Naive thymus-derived CD4-positive, alpha-beta T cell (primary cell): ENCODE measurements at regions of chr1 and their contacts with region 1.

Region 1: DNA sequence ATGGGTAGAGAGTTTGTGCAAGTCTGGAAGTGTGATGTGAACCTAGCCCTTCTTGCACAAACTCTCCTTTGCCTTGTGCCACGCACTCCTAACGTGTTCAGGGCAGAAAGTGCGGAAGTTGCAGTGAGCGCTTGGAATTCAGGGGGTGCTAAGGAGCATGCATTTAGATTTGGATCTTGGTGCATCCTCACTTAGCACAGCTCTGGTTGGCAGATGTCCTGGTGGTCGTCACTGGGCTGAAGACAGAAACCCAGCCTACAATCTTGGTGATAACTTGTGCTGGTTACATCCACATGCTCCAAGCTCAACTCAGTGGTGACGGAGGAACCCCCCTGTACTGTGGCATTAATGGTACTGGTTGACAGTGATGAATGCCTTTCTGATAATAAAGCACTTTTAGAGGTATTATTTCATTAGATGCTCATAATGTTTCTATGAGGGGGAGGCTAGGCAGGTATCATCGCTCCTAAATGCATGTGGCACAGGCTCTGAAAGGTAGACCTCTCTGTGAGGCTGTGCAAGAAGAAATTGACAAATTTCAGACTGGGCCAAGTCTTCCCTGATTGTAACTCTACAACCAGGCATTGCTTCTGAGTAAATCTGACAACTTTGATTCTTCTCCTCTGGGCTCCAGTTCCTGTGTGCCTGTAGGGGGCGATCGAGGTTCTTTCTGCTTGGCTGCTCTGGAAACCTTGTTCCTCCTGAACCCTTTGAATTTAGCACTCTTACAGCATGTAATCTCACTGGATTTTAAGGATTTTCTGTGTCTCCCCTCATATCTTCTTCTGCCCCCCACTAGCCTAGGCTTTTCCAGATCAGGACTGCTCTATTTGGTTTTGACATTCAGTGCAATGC is 40.6 kb downstream of the MAPKAPK2 start:
- DNase-seq: peak in 8 of 9 donors; percentile 35 to 64 (median 58)
- ATAC-seq: peak; percentile 61
- H3K4me3 ChIP-seq: no peak overlapping the region
- H3K4me3 Mint-ChIP-seq: no peak overlapping the region
- H3K27ac ChIP-seq: no peak overlapping the region
- H3K27ac Mint-ChIP-seq: peak overlapping the region in 8 of 9 donors; percentile 19 to 90 (median 58)
- H3K4me1 ChIP-seq: peaks cover 17 to 25% of the 10 kb centered on the region in 2 donors
- H3K4me1 Mint-ChIP-seq: peaks cover 29 to 50% (median 46%) of the 10 kb centered on the region in 7 donors
- H3K27me3 ChIP-seq: no peaks in the 10 kb centered on the region
- H3K27me3 Mint-ChIP-seq: no peaks in the 10 kb centered on the region

Region 2: GRCh38 chr1:206442101-206442500 is 283.2 kb before region 1 on chr1:
- CTCF ChIA-PET with region 1: no interaction called
- POLR2A ChIA-PET with region 1: no interaction called
- intact Hi-C with region 1: no loop called
- DNase-seq: no peak
- ATAC-seq: no peak
- H3K4me3 ChIP-seq: no peak overlapping the region
- H3K4me3 Mint-ChIP-seq: no peak overlapping the region
- H3K27ac ChIP-seq: no peak overlapping the region
- H3K27ac Mint-ChIP-seq: peak overlapping the region in 1 of 9 donors; percentile 16
- H3K4me1 ChIP-seq: no peaks in the 10 kb centered on the region
- H3K4me1 Mint-ChIP-seq: peaks cover 0 to 4% (median 0%) of the 10 kb centered on the region in 7 donors
- H3K27me3 ChIP-seq: no peaks in the 10 kb centered on the region
- H3K27me3 Mint-ChIP-seq: no peaks in the 10 kb centered on the region

Region 3: DNA sequence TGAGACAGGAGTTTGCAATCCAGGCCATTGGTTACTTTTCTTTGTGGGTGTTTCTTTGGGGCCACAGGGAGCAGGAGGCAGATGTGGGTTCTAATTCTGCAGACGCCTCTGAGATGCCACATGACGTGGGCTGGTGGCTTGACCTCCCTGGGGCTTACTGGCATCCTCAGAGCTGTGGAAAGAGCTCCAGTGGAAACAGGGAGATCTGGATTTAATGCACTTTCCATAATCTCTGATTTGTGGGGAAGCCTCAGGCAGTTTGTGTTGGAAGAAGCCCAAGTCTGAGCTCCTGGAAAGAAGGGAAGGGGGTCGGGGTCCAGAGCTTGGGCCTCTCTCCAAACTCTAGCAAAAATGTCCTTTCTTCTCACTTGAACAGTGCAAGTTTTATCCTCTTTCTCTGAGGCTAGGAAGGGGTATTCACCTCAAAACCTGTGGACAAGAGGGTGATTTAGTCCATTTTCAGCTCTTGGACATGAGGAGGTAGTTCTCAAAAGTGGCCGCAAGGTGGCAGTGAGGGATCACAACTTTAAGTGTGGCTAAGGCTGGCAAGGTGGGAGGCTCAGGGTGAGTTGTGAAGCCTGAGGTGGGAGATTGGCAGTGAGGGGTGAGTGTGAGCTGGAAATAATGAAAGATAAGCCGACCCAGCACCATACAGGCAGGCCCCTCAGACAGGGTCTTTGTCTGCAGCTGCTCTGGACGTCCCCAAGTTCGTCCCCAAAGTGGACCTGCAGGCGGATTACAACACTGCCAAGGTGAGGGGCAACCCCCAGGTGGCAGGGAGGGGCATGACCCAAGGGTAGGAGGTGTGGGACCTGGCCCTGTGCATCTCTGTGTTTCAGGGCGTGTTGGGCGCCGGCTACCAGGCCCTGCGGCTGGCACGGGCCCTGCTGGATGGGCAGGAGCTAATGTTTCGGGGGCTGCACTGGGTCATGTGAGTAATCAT is 245.9 kb before region 1 on chr1:
- CTCF ChIA-PET with region 1: no interaction called
- POLR2A ChIA-PET with region 1: no interaction called
- intact Hi-C with region 1: loop called in 1 of 2 experiments (anchors 1 kb)
- DNase-seq: peak in 8 of 9 donors; percentile 43 to 65 (median 56)
- ATAC-seq: peak; percentile 84
- H3K4me3 ChIP-seq: no peak overlapping the region
- H3K4me3 Mint-ChIP-seq: no peak overlapping the region
- H3K27ac ChIP-seq: no peak overlapping the region
- H3K27ac Mint-ChIP-seq: peak overlapping the region; percentile 20 to 85 (median 66)
- H3K4me1 ChIP-seq: peaks cover 0 to 11% of the 10 kb centered on the region in 2 donors
- H3K4me1 Mint-ChIP-seq: peaks cover 8 to 24% (median 17%) of the 10 kb centered on the region in 7 donors
- H3K27me3 ChIP-seq: no peaks in the 10 kb centered on the region
- H3K27me3 Mint-ChIP-seq: no peaks in the 10 kb centered on the region

Region 4: GRCh38 chr1:206658264-206658980 is 66.9 kb before region 1 on chr1:
- CTCF ChIA-PET with region 1: no interaction called
- POLR2A ChIA-PET with region 1: no interaction called
- intact Hi-C with region 1: loop called in 1 of 2 experiments (anchors 1 kb)
- DNase-seq: peak; percentile 17 to 69 (median 43)
- ATAC-seq: peak; percentile 95
- H3K4me3 ChIP-seq: no peak overlapping the region
- H3K4me3 Mint-ChIP-seq: peak overlapping the region in 1 of 10 donors; percentile 62
- H3K27ac ChIP-seq: no peak overlapping the region
- H3K27ac Mint-ChIP-seq: peak overlapping the region in 1 of 9 donors; percentile 51
- H3K4me1 ChIP-seq: no peaks in the 10 kb centered on the region
- H3K4me1 Mint-ChIP-seq: peaks cover 5 to 20% (median 10%) of the 10 kb centered on the region in 7 donors
- H3K27me3 ChIP-seq: peaks cover 0 to 4% of the 10 kb centered on the region in 2 donors
- H3K27me3 Mint-ChIP-seq: peaks cover 13 to 42% (median 37%) of the 10 kb centered on the region in 5 donors

Region 5: GRCh38 chr1:206703661-206704060 is 21.7 kb before region 1 on chr1:
- CTCF ChIA-PET with region 1: interaction called, 6 read pairs
- POLR2A ChIA-PET with region 1: interaction called, 3 read pairs
- intact Hi-C with region 1: loop called in 1 of 2 experiments (anchors 2 kb)
- DNase-seq: peak in 8 of 9 donors; percentile 32 to 84 (median 58)
- ATAC-seq: peak; percentile 89
- H3K4me3 ChIP-seq: no peak overlapping the region
- H3K4me3 Mint-ChIP-seq: peak overlapping the region; percentile 25 to 82 (median 64)
- H3K27ac ChIP-seq: peak overlapping the region; percentile 47
- H3K27ac Mint-ChIP-seq: peak overlapping the region; percentile 15 to 89 (median 77)
- H3K4me1 ChIP-seq: peaks cover 55 to 56% of the 10 kb centered on the region in 2 donors
- H3K4me1 Mint-ChIP-seq: peaks cover 78 to 94% (median 92%) of the 10 kb centered on the region in 7 donors
- H3K27me3 ChIP-seq: no peaks in the 10 kb centered on the region
- H3K27me3 Mint-ChIP-seq: no peaks in the 10 kb centered on the region

Region 6: DNA sequence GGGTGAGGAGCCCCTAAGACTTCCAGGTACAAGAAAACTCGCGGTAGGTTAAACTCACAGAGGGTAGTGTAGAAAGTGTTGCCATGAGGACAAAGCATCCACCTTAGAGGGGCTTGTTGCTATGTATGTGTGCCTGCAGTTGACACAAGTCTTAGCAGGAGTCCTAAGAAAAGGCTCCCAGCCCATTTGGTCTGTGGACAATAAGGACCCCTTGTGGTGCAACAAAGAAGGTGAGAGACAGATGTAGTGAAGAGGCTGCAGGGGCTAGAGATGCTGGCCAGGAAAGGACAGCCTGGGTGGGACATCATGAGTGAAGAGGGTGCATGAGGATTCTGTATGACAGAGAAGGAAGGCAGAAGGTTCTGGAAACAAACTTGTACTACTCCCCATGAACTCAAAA is 83.3 kb after region 1 on chr1:
- CTCF ChIA-PET with region 1: interaction called, 329 read pairs
- POLR2A ChIA-PET with region 1: interaction called, 148 read pairs
- intact Hi-C with region 1: loop called (anchors 1 kb)
- DNase-seq: peak in 7 of 9 donors; percentile 47 to 71 (median 58)
- ATAC-seq: peak; percentile 90
- H3K4me3 ChIP-seq: no peak overlapping the region
- H3K4me3 Mint-ChIP-seq: peak overlapping the region in 1 of 10 donors; percentile 8
- H3K27ac ChIP-seq: no peak overlapping the region
- H3K27ac Mint-ChIP-seq: peak overlapping the region in 8 of 9 donors; percentile 17 to 76 (median 51)
- H3K4me1 ChIP-seq: peaks cover 30 to 42% of the 10 kb centered on the region in 2 donors
- H3K4me1 Mint-ChIP-seq: peaks cover 24 to 61% (median 52%) of the 10 kb centered on the region in 7 donors
- H3K27me3 ChIP-seq: no peaks in the 10 kb centered on the region
- H3K27me3 Mint-ChIP-seq: peaks cover 0 to 12% (median 0%) of the 10 kb centered on the region in 5 donors

Region 7: GRCh38 chr1:206935491-206936067 is 210.2 kb after region 1 on chr1:
- CTCF ChIA-PET with region 1: interaction called, 27 read pairs
- POLR2A ChIA-PET with region 1: no interaction called
- intact Hi-C with region 1: loop called in 1 of 2 experiments (anchors 1 kb)
- DNase-seq: peak in 4 of 9 donors; percentile 28 to 56 (median 48)
- ATAC-seq: peak; percentile 68
- H3K4me3 ChIP-seq: no peak overlapping the region
- H3K4me3 Mint-ChIP-seq: no peak overlapping the region
- H3K27ac ChIP-seq: no peak overlapping the region
- H3K27ac Mint-ChIP-seq: peak overlapping the region in 1 of 9 donors; percentile 12
- H3K4me1 ChIP-seq: peaks cover 6 to 12% of the 10 kb centered on the region in 2 donors
- H3K4me1 Mint-ChIP-seq: peaks cover 2 to 31% (median 29%) of the 10 kb centered on the region in 7 donors
- H3K27me3 ChIP-seq: no peaks in the 10 kb centered on the region
- H3K27me3 Mint-ChIP-seq: peaks cover 0 to 8% (median 0%) of the 10 kb centered on the region in 5 donors

Region 8: DNA sequence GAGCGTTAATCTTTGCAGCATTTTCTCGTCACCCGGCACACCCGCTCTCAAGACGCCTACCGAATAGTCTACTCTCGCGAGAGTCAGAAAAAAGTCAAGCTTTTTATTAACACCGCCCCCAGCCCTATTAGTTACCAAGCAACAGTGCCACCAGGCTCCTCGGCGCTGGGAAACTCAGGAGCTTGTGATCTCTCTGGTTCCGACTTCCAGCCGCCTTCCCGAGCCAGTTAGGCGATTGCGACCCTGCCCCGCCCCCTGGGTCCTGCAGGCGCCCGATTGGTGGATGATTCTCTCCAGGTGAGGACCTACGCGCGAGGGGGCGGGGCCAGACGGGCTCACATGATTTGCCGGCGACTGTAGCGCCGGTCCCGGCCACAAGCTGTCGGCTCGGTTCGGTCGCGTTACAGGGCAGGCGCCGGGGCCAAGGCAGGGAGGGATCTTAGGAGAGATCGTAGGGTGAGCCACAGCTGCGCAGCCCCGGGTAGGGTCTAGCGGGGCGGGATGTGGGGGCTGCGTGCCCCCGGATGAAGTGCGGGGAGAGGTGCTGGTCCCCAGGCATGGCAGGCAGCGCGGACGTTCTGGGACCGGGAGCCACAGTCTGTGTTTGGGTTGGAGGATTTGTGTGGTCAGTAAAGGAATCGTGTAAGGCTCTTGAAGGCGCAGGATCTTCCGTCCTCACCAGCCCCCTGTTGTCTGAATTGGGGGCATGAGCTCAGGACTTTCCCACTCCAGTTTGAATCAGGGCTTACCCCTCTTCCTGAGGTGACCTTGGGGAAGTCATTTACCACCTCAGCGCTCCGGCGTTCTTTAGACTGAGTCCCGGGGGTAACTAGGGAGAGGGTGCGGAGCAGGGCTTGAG is 327.8 kb after region 1 on chr1 and contains the start of gene PFKFB2:
- CTCF ChIA-PET with region 1: no interaction called
- POLR2A ChIA-PET with region 1: no interaction called
- intact Hi-C with region 1: loop called in 1 of 2 experiments (anchors 5 kb)
- DNase-seq: peak; percentile 93 to 97 (median 96)
- ATAC-seq: peak; percentile 93
- H3K4me3 ChIP-seq: peak within 1 kb of the TSS; percentile 85
- H3K4me3 Mint-ChIP-seq: peak within 1 kb of the TSS; percentile 95 to 100 (median 98)
- H3K27ac ChIP-seq: peak within 1 kb of the TSS; percentile 72
- H3K27ac Mint-ChIP-seq: peak within 1 kb of the TSS; percentile 86 to 100 (median 97)
- H3K4me1 ChIP-seq: peaks cover 11 to 16% of the 10 kb centered on the region in 2 donors
- H3K4me1 Mint-ChIP-seq: peaks cover 25 to 54% (median 49%) of the 10 kb centered on the region in 7 donors
- H3K27me3 ChIP-seq: no peaks in the 10 kb centered on the region
- H3K27me3 Mint-ChIP-seq: peaks cover 0 to 12% (median 0%) of the 10 kb centered on the region in 5 donors
- total RNA-seq, gene PFKFB2: 2.3 to 4.6 (median 3.8) TPM

Region 9: GRCh38 chr1:208170252-208170651 is 1444.9 kb after region 1 on chr1:
- CTCF ChIA-PET with region 1: no interaction called
- POLR2A ChIA-PET with region 1: no interaction called
- intact Hi-C with region 1: no loop called
- DNase-seq: no peak
- ATAC-seq: no peak
- H3K4me3 ChIP-seq: no peak overlapping the region
- H3K4me3 Mint-ChIP-seq: no peak overlapping the region
- H3K27ac ChIP-seq: no peak overlapping the region
- H3K27ac Mint-ChIP-seq: no peak overlapping the region
- H3K4me1 ChIP-seq: no peaks in the 10 kb centered on the region
- H3K4me1 Mint-ChIP-seq: no peaks in the 10 kb centered on the region
- H3K27me3 ChIP-seq: no peaks in the 10 kb centered on the region
- H3K27me3 Mint-ChIP-seq: peaks cover 12 to 41% (median 31%) of the 10 kb centered on the region in 5 donors